ENCODE measurements at regions of chr16 and their contacts with region 1.

Region 1: GRCh38 chr16:12500771-12501170 is 302.9 kb downstream of the CPPED1 start:
- DNase-seq: peak in 1 of 2 donors; percentile 22
- ATAC-seq: peak in 1 of 8 donors; percentile 67
- H3K4me3 ChIP-seq: no peak overlapping the region
- H3K27ac ChIP-seq: no peak overlapping the region
- H3K4me1 ChIP-seq: peaks cover 0 to 4% (median 0%) of the 10 kb centered on the region in 9 donors
- H3K27me3 ChIP-seq: no peaks in the 10 kb centered on the region
- CTCF ChIP-seq: no peak

Region 2: DNA sequence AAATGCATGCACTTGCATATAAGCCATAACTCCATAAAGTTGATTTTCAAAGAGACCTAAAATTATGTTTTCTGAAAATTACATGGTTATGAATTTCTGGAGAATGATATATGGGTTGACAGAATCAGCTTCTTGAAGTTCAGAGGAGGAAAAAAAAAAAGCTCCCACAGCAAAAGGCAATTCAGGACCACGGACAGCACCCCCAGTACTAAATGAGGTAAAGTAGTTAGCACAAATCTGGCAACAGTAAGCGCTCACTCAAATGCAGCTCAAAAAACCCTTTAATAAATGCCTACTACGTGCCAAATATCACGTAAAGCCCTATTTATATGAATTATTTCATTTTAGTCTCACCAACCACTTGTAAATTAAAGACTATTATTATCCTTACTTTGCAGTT is 535.8 kb after region 1 on chr16:
- intact Hi-C with region 1: loop called in 1 of 10 experiments (anchors 5 kb)
- DNase-seq: peak; percentile 23 to 37
- ATAC-seq: no peak
- H3K4me3 ChIP-seq: no peak overlapping the region
- H3K27ac ChIP-seq: no peak overlapping the region
- H3K4me1 ChIP-seq: no peaks in the 10 kb centered on the region
- H3K27me3 ChIP-seq: peaks cover 0 to 3% (median 0%) of the 10 kb centered on the region in 7 donors
- CTCF ChIP-seq: no peak